Activated naive CD4-positive, alpha-beta T cell treated with anti-CD3 and anti-CD28 coated beads for 36 hours (primary cell): ENCODE measurements at regions of chr5 and their contacts with region 1.

Region 1: DNA sequence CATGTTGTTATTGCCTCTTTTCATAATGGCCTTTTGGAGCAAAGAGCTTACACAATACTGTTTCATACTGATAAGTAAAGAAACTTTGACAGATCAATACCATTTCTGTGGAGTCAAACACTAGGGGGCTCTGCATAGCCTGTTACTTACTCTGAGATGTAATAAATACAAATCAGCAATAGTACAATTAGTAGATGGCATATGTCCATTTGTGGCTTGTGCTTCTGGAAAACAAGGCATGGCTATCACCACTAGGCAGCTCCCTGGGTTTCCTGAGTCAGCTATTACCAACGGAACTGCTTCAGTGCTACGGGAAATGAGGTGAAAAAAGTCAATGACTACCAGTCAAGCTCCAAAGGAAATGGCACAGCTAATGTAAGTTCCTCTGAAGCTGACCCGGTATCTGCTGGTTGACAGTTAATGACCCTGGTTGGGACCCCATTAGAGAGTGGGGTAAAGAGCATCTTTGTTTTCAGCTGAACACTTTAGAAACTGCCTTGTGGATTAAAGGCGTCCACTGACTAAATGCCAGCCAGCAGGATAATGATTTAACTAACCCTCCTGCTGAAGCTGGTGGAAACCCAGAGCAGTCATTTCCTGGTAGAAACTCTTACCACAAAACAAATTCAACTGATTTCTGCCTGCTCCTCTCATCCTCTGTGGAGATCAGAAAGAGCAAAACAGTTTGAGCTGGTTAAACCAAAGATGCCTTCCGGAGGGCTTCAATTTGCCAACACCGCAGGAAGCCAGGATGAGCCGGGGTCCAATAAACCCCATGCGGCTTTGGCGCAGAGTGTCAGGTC is 69.0 kb upstream of the FAM169A start:
- DNase-seq: peak; percentile 60
- H3K4me3 Mint-ChIP-seq: peak overlapping the region; percentile 61
- H3K27ac Mint-ChIP-seq: peak overlapping the region; percentile 80
- H3K4me1 Mint-ChIP-seq: peaks cover 31% of the 10 kb centered on the region
- H3K27me3 Mint-ChIP-seq: no peaks in the 10 kb centered on the region

Region 2: DNA sequence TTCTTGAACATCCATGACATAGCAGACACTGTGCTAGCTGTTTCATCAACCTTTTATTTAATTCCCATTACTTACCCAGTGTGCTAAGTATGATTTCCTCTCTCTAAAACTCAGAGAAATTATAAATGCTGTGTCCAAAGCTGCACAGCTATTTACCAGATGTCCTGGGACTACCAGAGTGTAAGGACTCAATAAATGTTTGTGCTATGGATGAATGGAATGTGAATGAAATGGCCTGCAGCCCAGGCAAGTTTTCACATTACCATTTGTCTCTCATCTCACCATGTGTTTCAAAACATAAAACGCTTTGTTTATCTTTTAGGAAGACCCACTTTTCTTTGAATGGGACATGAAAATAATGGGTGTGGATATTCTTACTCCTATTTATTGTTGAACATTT is 1212.9 kb before region 1 on chr5:
- CTCF ChIA-PET with region 1: no interaction called
- intact Hi-C with region 1: no loop called
- DNase-seq: no peak
- H3K4me3 Mint-ChIP-seq: no peak overlapping the region
- H3K27ac Mint-ChIP-seq: no peak overlapping the region
- H3K4me1 Mint-ChIP-seq: no peaks in the 10 kb centered on the region
- H3K27me3 Mint-ChIP-seq: peaks cover 20% of the 10 kb centered on the region

Region 3: GRCh38 chr5:74945561-74946165 is 10.5 kb after region 1 on chr5:
- CTCF ChIA-PET with region 1: interaction called, 4 read pairs
- intact Hi-C with region 1: loop called (anchors 1 kb)
- DNase-seq: peak; percentile 51
- H3K4me3 Mint-ChIP-seq: no peak overlapping the region
- H3K27ac Mint-ChIP-seq: no peak overlapping the region
- H3K4me1 Mint-ChIP-seq: peaks cover 8% of the 10 kb centered on the region
- H3K27me3 Mint-ChIP-seq: peaks cover 15% of the 10 kb centered on the region

Region 4: DNA sequence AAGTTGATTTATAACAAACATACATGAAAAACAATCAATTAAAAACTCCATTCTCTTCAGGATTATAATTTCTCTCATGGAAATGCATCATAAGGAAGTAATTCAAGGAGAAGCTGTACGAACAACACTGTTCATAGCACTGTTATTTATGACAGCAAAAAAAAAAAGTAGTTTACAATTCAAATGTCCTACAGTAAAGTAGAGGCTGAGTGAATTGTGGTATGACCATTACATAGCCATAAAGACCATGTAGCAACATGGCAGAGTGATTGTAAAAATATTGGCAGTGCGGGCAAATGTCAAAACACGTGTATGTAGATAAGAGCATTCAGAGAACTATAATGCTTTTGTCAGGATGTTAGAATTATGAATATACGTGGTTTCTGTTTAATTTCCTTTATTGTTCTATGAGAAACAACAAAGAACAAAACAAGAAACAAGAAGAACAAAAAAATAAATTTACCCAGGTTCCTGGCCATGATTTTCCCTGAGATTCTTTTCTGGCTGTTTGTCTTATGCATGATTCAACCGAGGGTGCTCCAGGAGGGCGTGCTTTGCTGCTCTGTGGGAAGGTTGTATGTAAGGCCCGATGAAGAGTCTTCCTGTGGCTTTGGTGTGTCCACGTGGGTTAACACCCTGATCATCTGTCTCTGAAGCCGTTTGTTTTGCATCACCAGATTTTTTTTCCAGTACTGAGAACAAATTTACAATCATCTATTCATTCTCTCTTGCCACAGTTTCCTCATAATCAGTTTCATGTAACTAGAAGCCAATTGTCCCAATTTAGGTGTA is 88.4 kb after region 1 on chr5:
- CTCF ChIA-PET with region 1: no interaction called
- intact Hi-C with region 1: loop called (anchors 5 kb)
- DNase-seq: peak; percentile 55
- H3K4me3 Mint-ChIP-seq: peak overlapping the region; percentile 8
- H3K27ac Mint-ChIP-seq: no peak overlapping the region
- H3K4me1 Mint-ChIP-seq: peaks cover 32% of the 10 kb centered on the region
- H3K27me3 Mint-ChIP-seq: no peaks in the 10 kb centered on the region

Region 5: GRCh38 chr5:75236322-75237316 is 301.5 kb after region 1 on chr5 and contains the start of gene ANKRD31:
- CTCF ChIA-PET with region 1: interaction called, 4 read pairs
- intact Hi-C with region 1: loop called (anchors 10 kb)
- DNase-seq: peak; percentile 88
- H3K4me3 Mint-ChIP-seq: peak within 1 kb of the TSS; percentile 95
- H3K27ac Mint-ChIP-seq: peak within 1 kb of the TSS; percentile 97
- H3K4me1 Mint-ChIP-seq: peaks cover 17% of the 10 kb centered on the region
- H3K27me3 Mint-ChIP-seq: no peaks in the 10 kb centered on the region
- total RNA-seq, gene ANKRD31: 0.35 to 0.36 TPM

Region 6: GRCh38 chr5:75336625-75337339 is 401.6 kb after region 1 on chr5 and contains the start of gene HMGCR:
- CTCF ChIA-PET with region 1: no interaction called
- intact Hi-C with region 1: loop called (anchors 1 kb)
- DNase-seq: peak; percentile 99
- H3K4me3 Mint-ChIP-seq: no peak within 1 kb of the TSS
- H3K27ac Mint-ChIP-seq: no peak within 1 kb of the TSS
- H3K4me1 Mint-ChIP-seq: peaks cover 35% of the 10 kb centered on the region
- H3K27me3 Mint-ChIP-seq: no peaks in the 10 kb centered on the region
- total RNA-seq, gene HMGCR: 61.7 to 67.5 TPM

Region 7: GRCh38 chr5:75668977-75669689 is 734.0 kb after region 1 on chr5:
- CTCF ChIA-PET with region 1: no interaction called
- intact Hi-C with region 1: loop called (anchors 5 kb)
- DNase-seq: peak; percentile 82
- H3K4me3 Mint-ChIP-seq: peak overlapping the region; percentile 49
- H3K27ac Mint-ChIP-seq: peak overlapping the region; percentile 70
- H3K4me1 Mint-ChIP-seq: peaks cover 30% of the 10 kb centered on the region
- H3K27me3 Mint-ChIP-seq: no peaks in the 10 kb centered on the region